Caco-2 (cell line): ENCODE measurements at regions of chr11 and their contacts with region 1.

Region 1: DNA sequence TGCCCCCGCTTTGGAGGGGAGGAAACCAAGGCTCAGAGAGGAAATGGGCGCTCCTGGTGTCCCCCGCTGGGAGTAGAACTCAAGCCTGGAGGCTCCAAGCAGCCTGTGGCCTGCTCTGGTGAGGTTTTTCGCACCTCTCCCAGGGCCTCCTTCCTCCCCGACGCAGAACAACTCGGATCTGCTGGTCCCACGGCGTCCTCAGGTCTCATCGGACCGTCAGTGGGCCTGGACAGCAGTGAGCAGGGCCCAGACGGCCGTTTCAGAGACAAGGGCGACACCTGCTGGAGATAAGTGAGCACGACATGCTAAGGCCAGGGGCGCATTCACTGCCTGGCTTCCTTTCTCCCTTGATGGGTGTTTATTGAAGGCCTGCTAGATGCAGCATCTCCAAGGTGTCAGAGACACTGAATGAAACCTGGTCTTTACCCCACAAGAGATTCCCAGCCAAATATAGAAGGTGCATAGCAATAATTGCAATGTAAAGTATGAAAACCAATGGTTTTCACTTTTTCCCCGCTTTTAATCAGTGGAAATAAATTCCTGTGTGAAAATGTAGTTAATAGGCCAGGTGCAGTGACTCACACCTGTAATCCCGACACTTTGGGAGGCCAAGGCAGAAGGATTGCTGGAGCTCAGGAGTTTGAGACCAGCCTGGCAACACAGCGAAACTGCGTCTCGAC is 26.9 kb upstream of the CD82 start:
- DNase-seq: peak; percentile 71 to 83
- H3K4me3 ChIP-seq: no peak overlapping the region
- H3K4me3 Mint-ChIP-seq: no peak overlapping the region
- H3K27ac Mint-ChIP-seq: no peak overlapping the region
- H3K4me1 ChIP-seq: no peaks in the 10 kb centered on the region
- H3K4me1 Mint-ChIP-seq: no peaks in the 10 kb centered on the region
- H3K27me3 ChIP-seq: no peaks in the 10 kb centered on the region
- H3K27me3 Mint-ChIP-seq: peaks cover 3% of the 10 kb centered on the region
- CTCF ChIP-seq: peak; percentile 90 to 98

Region 2: DNA sequence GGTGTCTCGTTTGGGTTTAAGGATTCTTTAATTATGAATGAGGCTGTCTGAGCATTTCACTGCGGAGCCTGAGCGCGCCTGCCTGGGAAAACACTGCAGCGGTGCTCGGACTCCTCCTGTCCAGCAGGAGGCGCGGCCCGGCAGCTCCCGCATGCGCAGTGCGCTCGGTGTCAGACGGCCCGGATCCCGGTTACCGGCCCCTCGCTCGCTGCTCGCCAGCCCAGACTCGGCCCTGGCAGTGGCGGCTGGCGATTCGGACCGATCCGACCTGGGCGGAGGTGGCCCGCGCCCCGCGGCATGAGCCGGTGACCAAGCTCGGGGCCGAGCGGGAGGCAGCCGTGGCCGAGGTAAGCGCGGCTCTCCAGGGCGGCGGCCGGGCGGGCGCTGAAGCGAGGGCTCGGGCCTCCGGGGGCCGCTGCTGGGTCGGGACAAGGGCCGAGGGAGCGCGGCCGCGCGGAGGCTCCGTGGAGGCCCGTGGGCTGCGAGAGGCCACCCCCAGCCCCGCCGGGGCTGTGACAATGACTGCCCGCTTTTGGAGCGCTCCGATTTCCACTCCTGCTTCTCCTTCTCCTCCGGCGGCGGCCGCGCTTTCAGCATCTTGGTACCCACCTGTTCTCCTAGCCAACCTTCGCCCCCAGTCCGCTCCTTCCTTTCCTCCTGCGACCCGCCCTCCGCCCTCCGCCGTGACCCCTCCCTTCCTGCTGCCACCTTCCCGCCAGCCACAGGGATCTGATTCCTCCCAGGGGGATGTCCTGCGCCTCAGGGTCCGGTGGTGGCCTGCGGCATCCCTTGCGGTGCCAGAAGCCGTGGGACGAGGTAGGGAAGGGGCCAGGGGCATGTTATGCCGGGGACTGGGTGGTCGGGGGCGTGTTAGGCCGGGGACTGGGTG is 442.8 kb before region 1 on chr11 and contains the start of gene EXT2:
- CTCF ChIA-PET with region 1: interaction called, 5 read pairs
- POLR2A ChIA-PET with region 1: no interaction called
- intact Hi-C with region 1: loop called (anchors 1 kb)
- DNase-seq: peak; percentile 84 to 92
- H3K4me3 ChIP-seq: peak within 1 kb of the TSS; percentile 95
- H3K4me3 Mint-ChIP-seq: peak within 1 kb of the TSS; percentile 94
- H3K27ac Mint-ChIP-seq: peak within 1 kb of the TSS; percentile 83
- H3K4me1 ChIP-seq: peaks cover 6% of the 10 kb centered on the region; the same call in 1 of the 2 replicates
- H3K4me1 Mint-ChIP-seq: peaks cover 18% of the 10 kb centered on the region
- H3K27me3 ChIP-seq: no peaks in the 10 kb centered on the region
- H3K27me3 Mint-ChIP-seq: peaks cover 3% of the 10 kb centered on the region
- CTCF ChIP-seq: peak; percentile 76 to 97
- total RNA-seq, gene EXT2: 71.5 and 83.3 TPM in 2 replicates

Region 3: GRCh38 chr11:44110231-44110679 is 428.3 kb before region 1 on chr11:
- CTCF ChIA-PET with region 1: no interaction called
- POLR2A ChIA-PET with region 1: no interaction called
- intact Hi-C with region 1: loop called (anchors 1 kb)
- DNase-seq: peak; percentile 59 to 71
- H3K4me3 ChIP-seq: no peak overlapping the region
- H3K4me3 Mint-ChIP-seq: no peak overlapping the region
- H3K27ac Mint-ChIP-seq: no peak overlapping the region
- H3K4me1 ChIP-seq: no peaks in the 10 kb centered on the region
- H3K4me1 Mint-ChIP-seq: no peaks in the 10 kb centered on the region
- H3K27me3 ChIP-seq: no peaks in the 10 kb centered on the region
- H3K27me3 Mint-ChIP-seq: no peaks in the 10 kb centered on the region
- CTCF ChIP-seq: peak; percentile 72 to 89

Region 4: DNA sequence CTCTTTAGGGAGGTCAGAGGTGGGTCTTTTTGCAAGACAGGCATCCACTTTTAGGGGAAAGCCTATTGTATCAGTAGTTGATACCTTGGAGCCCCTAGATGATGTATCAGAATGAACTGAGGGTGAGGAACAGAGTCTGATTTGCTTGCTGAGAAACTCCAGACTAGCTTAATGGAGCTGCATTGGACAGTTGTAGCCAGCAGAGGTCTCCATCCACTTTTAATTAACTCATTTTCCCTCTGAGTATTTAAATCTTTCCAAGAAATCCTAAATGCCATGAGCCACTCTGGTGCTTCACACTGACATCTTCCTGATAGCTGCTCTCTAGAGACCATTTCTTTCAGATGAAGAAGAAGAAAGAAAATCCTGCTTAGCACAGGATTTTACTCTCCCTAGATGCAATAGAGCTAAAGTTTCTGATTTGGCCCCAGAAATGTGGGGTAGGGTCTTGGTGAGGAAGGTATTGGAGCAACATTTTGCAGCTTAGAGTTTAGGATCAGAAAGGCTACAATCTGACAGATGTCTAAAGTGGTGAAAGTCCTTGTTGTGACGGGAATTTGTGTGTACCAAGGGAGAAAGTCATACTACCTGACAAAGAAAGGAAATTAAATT is 405.1 kb before region 1 on chr11:
- CTCF ChIA-PET with region 1: interaction called, 3 read pairs
- POLR2A ChIA-PET with region 1: no interaction called
- intact Hi-C with region 1: loop called (anchors 1 kb)
- DNase-seq: peak in 1 of 2 experiments; percentile 24
- H3K4me3 ChIP-seq: no peak overlapping the region
- H3K4me3 Mint-ChIP-seq: no peak overlapping the region
- H3K27ac Mint-ChIP-seq: no peak overlapping the region
- H3K4me1 ChIP-seq: peaks cover 10% of the 10 kb centered on the region; the same call in 1 of the 2 replicates
- H3K4me1 Mint-ChIP-seq: peaks cover 18% of the 10 kb centered on the region
- H3K27me3 ChIP-seq: no peaks in the 10 kb centered on the region
- H3K27me3 Mint-ChIP-seq: no peaks in the 10 kb centered on the region
- CTCF ChIP-seq: peak; percentile 69 to 85

Region 5: DNA sequence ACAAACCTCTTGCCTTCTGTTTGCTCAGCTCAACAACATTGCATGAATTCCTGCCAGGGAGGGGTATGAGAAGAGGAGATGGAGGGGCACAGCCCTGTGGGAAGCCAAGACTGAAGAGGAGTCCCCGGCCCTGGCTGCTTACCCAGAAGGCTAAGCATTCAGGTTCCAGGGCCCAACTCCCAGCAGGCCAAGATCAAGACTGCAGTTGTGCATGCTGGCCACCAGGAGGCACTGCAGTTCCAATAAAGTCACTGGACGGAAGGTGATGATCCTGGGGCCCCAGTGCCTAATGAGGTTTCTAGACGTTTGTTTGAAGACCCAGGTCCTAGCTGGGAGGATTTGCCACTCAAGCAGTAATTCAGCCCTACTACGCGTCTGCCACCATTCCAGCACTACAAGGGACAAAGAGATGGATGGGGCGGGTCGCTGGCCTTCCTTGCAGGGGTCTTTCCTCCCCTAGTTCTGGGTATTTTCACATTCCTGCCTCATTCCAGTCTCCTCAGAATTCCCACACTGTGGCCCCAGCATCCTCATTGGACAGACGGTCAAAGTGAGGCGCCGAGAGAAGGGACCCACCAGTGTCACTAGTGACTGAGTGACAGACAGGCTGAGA is 252.1 kb before region 1 on chr11:
- CTCF ChIA-PET with region 1: no interaction called
- POLR2A ChIA-PET with region 1: no interaction called
- intact Hi-C with region 1: loop called (anchors 1 kb)
- DNase-seq: peak; percentile 56
- H3K4me3 ChIP-seq: no peak overlapping the region
- H3K4me3 Mint-ChIP-seq: no peak overlapping the region
- H3K27ac Mint-ChIP-seq: peak overlapping the region; percentile 73
- H3K4me1 ChIP-seq: peaks cover 18% of the 10 kb centered on the region
- H3K4me1 Mint-ChIP-seq: peaks cover 17% of the 10 kb centered on the region
- H3K27me3 ChIP-seq: no peaks in the 10 kb centered on the region
- H3K27me3 Mint-ChIP-seq: no peaks in the 10 kb centered on the region
- CTCF ChIP-seq: peak; percentile 92 to 93

Region 6: GRCh38 chr11:44519989-44520737 is 18.4 kb before region 1 on chr11:
- CTCF ChIA-PET with region 1: interaction called, 4 read pairs
- POLR2A ChIA-PET with region 1: no interaction called
- intact Hi-C with region 1: loop called (anchors 1 kb)
- DNase-seq: no peak
- H3K4me3 ChIP-seq: no peak overlapping the region
- H3K4me3 Mint-ChIP-seq: no peak overlapping the region
- H3K27ac Mint-ChIP-seq: no peak overlapping the region
- H3K4me1 ChIP-seq: no peaks in the 10 kb centered on the region
- H3K4me1 Mint-ChIP-seq: no peaks in the 10 kb centered on the region
- H3K27me3 ChIP-seq: no peaks in the 10 kb centered on the region
- H3K27me3 Mint-ChIP-seq: peaks cover 6% of the 10 kb centered on the region
- CTCF ChIP-seq: no peak

Region 7: DNA sequence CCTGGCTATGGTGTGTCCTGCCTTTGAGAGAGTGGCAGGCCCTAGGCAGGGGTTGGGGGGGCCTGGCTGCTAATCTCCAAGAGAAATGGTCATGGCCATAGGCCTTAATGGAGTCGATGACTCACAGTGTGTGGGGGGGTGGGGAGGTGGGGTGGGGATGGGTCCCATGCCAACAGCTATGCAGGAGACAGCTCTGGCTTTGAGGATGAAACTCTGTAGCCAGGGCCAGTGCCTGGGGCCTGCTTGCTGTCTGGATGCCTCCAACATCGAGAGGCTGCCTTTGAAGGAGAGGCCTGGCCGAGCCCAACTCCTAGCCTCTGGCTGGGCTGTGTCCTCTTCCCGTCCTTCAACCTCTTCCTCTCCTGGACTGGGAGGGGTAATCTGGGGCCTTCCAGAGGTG is 164.4 kb after region 1 on chr11:
- CTCF ChIA-PET with region 1: no interaction called
- POLR2A ChIA-PET with region 1: no interaction called
- intact Hi-C with region 1: no loop called
- DNase-seq: no peak
- H3K4me3 ChIP-seq: no peak overlapping the region
- H3K4me3 Mint-ChIP-seq: no peak overlapping the region
- H3K27ac Mint-ChIP-seq: no peak overlapping the region
- H3K4me1 ChIP-seq: peaks cover 2% of the 10 kb centered on the region; the same call in 1 of the 2 replicates
- H3K4me1 Mint-ChIP-seq: no peaks in the 10 kb centered on the region
- H3K27me3 ChIP-seq: no peaks in the 10 kb centered on the region
- H3K27me3 Mint-ChIP-seq: peaks cover 2% of the 10 kb centered on the region
- CTCF ChIP-seq: no peak